AG04450 (cell line): ENCODE measurements at regions of chr15 and their contacts with region 1.

Region 1: GRCh38 chr15:85886309-85886811 is 91.6 kb upstream of the KLHL25 start:
- DNase-seq: no peak
- H3K4me3 ChIP-seq: no peak overlapping the region
- H3K27ac ChIP-seq: no peak overlapping the region
- H3K27me3 ChIP-seq: peaks cover 3% of the 10 kb centered on the region
- CTCF ChIP-seq: no peak

Region 2: GRCh38 chr15:85858586-85859375 is 27.6 kb before region 1 on chr15:
- CTCF ChIA-PET with region 1: interaction called, 15 read pairs
- POLR2A ChIA-PET with region 1: no interaction called
- DNase-seq: no peak
- H3K4me3 ChIP-seq: 0 out of 2 replicates have a peak overlapping the region, but pooled peaks have one; percentile 20
- H3K27ac ChIP-seq: no peak overlapping the region
- H3K27me3 ChIP-seq: peaks cover 6% of the 10 kb centered on the region
- CTCF ChIP-seq: peak; percentile 78